ENCODE measurements at regions of chr6 and their contacts with region 1.

Region 1: DNA sequence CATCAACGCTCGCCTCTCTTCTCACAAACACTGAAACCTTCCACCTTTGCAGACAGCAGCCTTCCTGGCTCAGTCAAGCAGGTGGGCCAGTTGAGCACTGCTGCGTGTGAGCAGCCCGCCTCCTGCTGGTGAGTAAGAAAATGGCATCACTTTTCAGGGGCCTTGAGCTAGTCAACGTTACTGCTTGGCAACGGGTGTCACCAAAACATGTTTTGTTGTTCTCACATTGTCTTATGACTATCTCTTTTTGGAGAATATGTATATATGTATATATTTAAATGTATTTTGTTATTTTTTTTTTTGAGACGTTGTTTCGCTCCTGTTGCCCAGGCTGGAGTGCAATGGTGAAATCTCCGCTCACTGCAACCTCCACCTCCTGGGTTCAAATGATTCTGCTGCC is 97.0 kb upstream of the AGPAT4 start:
- DNase-seq: peak in 2 of 3 donors; percentile 52 to 60
- ATAC-seq: peak; percentile 78 to 85 (median 80)
- H3K4me3 ChIP-seq: no peak overlapping the region
- H3K27ac ChIP-seq: no peak overlapping the region
- H3K4me1 ChIP-seq: no peaks in the 10 kb centered on the region
- H3K27me3 ChIP-seq: no peaks in the 10 kb centered on the region
- CTCF ChIP-seq: peak; percentile 81 to 97 (median 91)
- POLR2A ChIP-seq: no peak

Region 2: GRCh38 chr6:160882706-160883359 is 488.0 kb before region 1 on chr6:
- intact Hi-C with region 1: no loop called
- DNase-seq: no peak
- ATAC-seq: no peak
- H3K4me3 ChIP-seq: no peak overlapping the region
- H3K27ac ChIP-seq: no peak overlapping the region
- H3K4me1 ChIP-seq: no peaks in the 10 kb centered on the region
- H3K27me3 ChIP-seq: no peaks in the 10 kb centered on the region
- CTCF ChIP-seq: no peak
- POLR2A ChIP-seq: no peak

Region 3: GRCh38 chr6:160930547-160931377 is 440.1 kb before region 1 on chr6:
- intact Hi-C with region 1: loop called (anchors 5 kb)
- DNase-seq: peak; percentile 75 to 77 (median 77)
- ATAC-seq: peak; percentile 98 to 99 (median 98)
- H3K4me3 ChIP-seq: peak overlapping the region; percentile 34 to 49 (median 35)
- H3K27ac ChIP-seq: no peak overlapping the region
- H3K4me1 ChIP-seq: peaks cover 0 to 5% (median 0%) of the 10 kb centered on the region in 4 donors
- H3K27me3 ChIP-seq: no peaks in the 10 kb centered on the region
- CTCF ChIP-seq: peak; percentile 82 to 91 (median 86)
- POLR2A ChIP-seq: no peak

Region 4: GRCh38 chr6:161152907-161153662 is 217.8 kb before region 1 on chr6:
- intact Hi-C with region 1: loop called in 1 of 2 experiments (anchors 10 kb)
- DNase-seq: peak in 1 of 3 donors; percentile 46
- ATAC-seq: peak; percentile 67 to 81 (median 72)
- H3K4me3 ChIP-seq: no peak overlapping the region
- H3K27ac ChIP-seq: no peak overlapping the region
- H3K4me1 ChIP-seq: no peaks in the 10 kb centered on the region
- H3K27me3 ChIP-seq: no peaks in the 10 kb centered on the region
- CTCF ChIP-seq: peak; percentile 44 to 74 (median 59)
- POLR2A ChIP-seq: no peak

Region 5: GRCh38 chr6:161257793-161258457 is 113.0 kb before region 1 on chr6:
- intact Hi-C with region 1: no loop called
- DNase-seq: no peak
- ATAC-seq: no peak
- H3K4me3 ChIP-seq: no peak overlapping the region
- H3K27ac ChIP-seq: no peak overlapping the region
- H3K4me1 ChIP-seq: no peaks in the 10 kb centered on the region
- H3K27me3 ChIP-seq: no peaks in the 10 kb centered on the region
- CTCF ChIP-seq: no peak
- POLR2A ChIP-seq: no peak

Region 6: GRCh38 chr6:161429921-161430490 is 59.1 kb after region 1 on chr6:
- intact Hi-C with region 1: no loop called
- DNase-seq: no peak
- ATAC-seq: no peak
- H3K4me3 ChIP-seq: no peak overlapping the region
- H3K27ac ChIP-seq: no peak overlapping the region
- H3K4me1 ChIP-seq: no peaks in the 10 kb centered on the region
- H3K27me3 ChIP-seq: no peaks in the 10 kb centered on the region
- CTCF ChIP-seq: no peak
- POLR2A ChIP-seq: no peak

Measured in right lobe of liver (tissue), 6 donors.